ENCODE measurements at regions of chr21 and their contacts with region 1.

Region 1: DNA sequence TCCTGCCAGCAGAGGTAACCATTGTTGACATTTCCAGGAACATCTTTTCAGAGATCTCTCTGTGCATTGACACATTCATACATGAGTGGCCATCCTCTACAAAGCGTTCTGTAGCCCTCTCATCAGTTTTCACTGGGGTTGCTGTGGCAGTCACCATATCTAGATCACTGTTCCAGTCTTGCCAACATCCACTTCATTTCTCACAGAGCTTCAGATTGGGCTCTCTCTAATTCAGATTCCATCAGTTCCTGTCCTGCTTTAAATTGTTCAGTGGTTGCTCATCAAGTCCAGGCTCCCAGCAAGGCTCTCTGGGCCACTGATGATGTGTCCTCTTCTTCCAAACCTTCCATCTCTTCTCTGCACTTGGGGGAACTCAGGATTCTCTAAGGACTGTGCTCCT is 173.7 kb downstream of the KCNJ6 start:
- DNase-seq: no peak
- H3K4me3 ChIP-seq: no peak overlapping the region
- H3K27ac ChIP-seq: no peak overlapping the region
- H3K4me1 ChIP-seq: no peaks in the 10 kb centered on the region
- H3K27me3 ChIP-seq: no peaks in the 10 kb centered on the region
- CTCF ChIP-seq: no peak

Region 2: GRCh38 chr21:38126669-38127303 is 384.3 kb after region 1 on chr21:
- dilution Hi-C with region 1: loop called (anchors 25 kb)
- DNase-seq: no peak
- H3K4me3 ChIP-seq: no peak overlapping the region
- H3K27ac ChIP-seq: no peak overlapping the region
- H3K4me1 ChIP-seq: no peaks in the 10 kb centered on the region
- H3K27me3 ChIP-seq: peaks cover 11% of the 10 kb centered on the region
- CTCF ChIP-seq: peak; percentile 91 to 92 (median 92)